ENCODE measurements at regions of chr6 and their contacts with region 1.

Region 1: DNA sequence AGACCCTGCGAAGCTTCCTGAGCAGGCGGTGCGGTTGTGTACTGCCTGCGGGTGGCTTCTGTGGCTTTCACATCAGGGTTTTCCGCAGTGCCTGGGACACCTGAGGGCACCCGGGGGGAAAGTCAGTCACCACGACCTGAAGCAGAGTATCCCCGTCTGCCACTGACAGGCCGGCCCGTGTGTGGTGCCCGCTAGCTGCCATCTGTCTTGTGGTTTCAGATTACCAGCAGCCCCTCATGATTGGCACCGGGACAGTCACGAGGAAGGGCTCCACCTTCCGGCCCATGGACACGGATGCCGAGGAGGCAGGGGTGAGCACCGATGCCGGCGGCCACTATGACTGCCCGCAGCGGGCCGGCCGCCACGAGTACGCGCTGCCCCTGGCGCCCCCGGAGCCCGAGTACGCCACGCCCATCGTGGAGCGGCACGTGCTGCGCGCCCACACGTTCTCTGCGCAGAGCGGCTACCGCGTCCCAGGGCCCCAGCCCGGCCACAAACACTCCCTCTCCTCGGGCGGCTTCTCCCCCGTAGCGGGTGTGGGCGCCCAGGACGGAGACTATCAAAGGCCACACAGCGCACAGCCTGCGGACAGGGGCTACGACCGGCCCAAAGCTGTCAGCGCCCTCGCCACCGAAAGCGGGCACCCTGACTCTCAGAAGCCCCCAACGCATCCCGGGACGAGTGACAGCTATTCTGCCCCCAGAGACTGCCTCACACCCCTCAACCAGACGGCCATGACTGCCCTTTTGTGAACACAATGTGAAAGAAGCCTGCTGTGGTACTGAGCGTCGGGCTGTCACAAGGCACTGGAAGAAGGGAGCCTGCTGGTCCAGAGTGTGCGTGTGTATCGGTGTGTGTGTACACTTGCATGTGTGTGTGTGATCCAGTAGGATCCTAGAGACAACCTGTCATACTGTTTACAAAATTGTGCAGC is 54.4 kb downstream of the GOPC start:
- DNase-seq: peak; percentile 56
- H3K4me3 Mint-ChIP-seq: peak overlapping the region; percentile 73
- H3K27ac Mint-ChIP-seq: peak overlapping the region; percentile 64
- H3K4me1 Mint-ChIP-seq: peaks cover 33% of the 10 kb centered on the region
- H3K27me3 Mint-ChIP-seq: peaks cover 5% of the 10 kb centered on the region

Region 2: DNA sequence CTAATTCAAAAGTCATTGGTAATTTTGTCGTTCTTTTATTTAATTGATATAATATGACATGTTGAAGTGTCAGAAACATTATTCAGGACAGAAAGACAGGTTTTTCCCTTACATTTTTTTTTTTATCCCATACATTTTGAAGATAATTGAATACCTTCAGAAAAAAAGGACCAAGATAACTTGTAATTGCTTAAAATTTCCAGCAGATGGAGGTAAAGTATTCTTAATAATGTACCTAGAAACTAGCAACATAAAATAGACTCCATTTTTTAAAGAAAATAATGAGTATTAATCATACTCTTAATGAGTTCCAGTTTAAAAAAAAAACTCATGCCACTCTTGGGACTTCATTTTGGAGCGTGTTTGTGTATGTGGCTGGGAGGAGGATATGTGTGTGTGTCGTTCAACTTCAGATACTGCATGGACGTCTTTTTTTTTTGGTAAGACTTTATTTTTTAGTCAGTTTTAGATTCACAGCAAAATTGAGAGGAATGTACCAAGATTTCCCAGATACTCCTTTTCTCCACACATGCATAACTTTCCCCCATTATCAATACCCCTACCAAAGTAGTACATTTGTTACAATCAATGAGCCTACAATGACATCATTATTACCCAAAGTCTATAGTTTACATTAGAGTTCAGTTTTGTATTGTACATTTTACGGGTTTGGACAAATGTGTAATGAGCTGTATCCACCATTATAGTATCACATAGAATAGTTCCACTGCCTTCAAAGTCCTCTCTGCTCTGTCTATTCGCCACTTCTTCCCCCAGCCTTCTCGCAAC is 201.6 kb before region 1 on chr6:
- CTCF ChIA-PET with region 1: no interaction called
- POLR2A ChIA-PET with region 1: no interaction called
- intact Hi-C with region 1: loop called (anchors 2 kb)
- DNase-seq: no peak
- H3K4me3 Mint-ChIP-seq: no peak overlapping the region
- H3K27ac Mint-ChIP-seq: no peak overlapping the region
- H3K4me1 Mint-ChIP-seq: no peaks in the 10 kb centered on the region
- H3K27me3 Mint-ChIP-seq: peaks cover 3% of the 10 kb centered on the region

Region 3: DNA sequence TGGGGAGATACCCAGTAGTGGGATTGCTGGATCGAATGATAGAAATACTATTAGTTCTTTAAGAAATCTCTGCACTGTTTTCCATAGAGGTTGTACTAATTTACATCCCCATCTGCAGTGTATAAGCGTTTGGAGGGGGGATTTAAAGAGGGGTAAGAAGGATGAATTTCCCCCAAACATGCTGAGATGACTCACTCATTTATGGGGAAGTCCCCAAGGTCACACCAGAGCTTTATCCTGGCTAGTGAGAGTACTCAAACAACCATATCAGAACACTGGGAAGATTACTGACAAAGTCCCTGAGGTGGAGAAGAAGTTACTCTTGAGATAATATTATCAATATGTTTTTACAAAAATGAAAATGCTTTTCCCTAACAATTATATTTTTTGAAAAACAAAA is 166.2 kb before region 1 on chr6:
- CTCF ChIA-PET with region 1: no interaction called
- POLR2A ChIA-PET with region 1: no interaction called
- intact Hi-C with region 1: no loop called
- DNase-seq: no peak
- H3K4me3 Mint-ChIP-seq: no peak overlapping the region
- H3K27ac Mint-ChIP-seq: no peak overlapping the region
- H3K4me1 Mint-ChIP-seq: no peaks in the 10 kb centered on the region
- H3K27me3 Mint-ChIP-seq: peaks cover 7% of the 10 kb centered on the region

Region 4: GRCh38 chr6:117463762-117464665 is 83.9 kb before region 1 on chr6:
- CTCF ChIA-PET with region 1: no interaction called
- POLR2A ChIA-PET with region 1: interaction called, 3 read pairs
- intact Hi-C with region 1: loop called (anchors 1 kb)
- DNase-seq: peak; percentile 33
- H3K4me3 Mint-ChIP-seq: peak overlapping the region; percentile 16
- H3K27ac Mint-ChIP-seq: peak overlapping the region; percentile 57
- H3K4me1 Mint-ChIP-seq: peaks cover 15% of the 10 kb centered on the region
- H3K27me3 Mint-ChIP-seq: peaks cover 13% of the 10 kb centered on the region

Region 5: GRCh38 chr6:117482240-117483003 is 65.5 kb before region 1 on chr6 and contains the start of gene DCBLD1:
- CTCF ChIA-PET with region 1: interaction called, 6 read pairs
- POLR2A ChIA-PET with region 1: interaction called, 17 read pairs
- intact Hi-C with region 1: loop called (anchors 1 kb)
- DNase-seq: peak; percentile 74
- H3K4me3 Mint-ChIP-seq: peak within 1 kb of the TSS; percentile 82
- H3K27ac Mint-ChIP-seq: no peak within 1 kb of the TSS
- H3K4me1 Mint-ChIP-seq: peaks cover 12% of the 10 kb centered on the region
- H3K27me3 Mint-ChIP-seq: peaks cover 23% of the 10 kb centered on the region
- total RNA-seq, gene DCBLD1: 4.4 to 4.5 TPM

Region 6: GRCh38 chr6:117568831-117569410 is 21.0 kb after region 1 on chr6:
- CTCF ChIA-PET with region 1: interaction called, 9 read pairs
- POLR2A ChIA-PET with region 1: interaction called, 13 read pairs
- intact Hi-C with region 1: loop called (anchors 1 kb)
- DNase-seq: no peak
- H3K4me3 Mint-ChIP-seq: no peak overlapping the region
- H3K27ac Mint-ChIP-seq: no peak overlapping the region
- H3K4me1 Mint-ChIP-seq: peaks cover 17% of the 10 kb centered on the region
- H3K27me3 Mint-ChIP-seq: no peaks in the 10 kb centered on the region

Region 7: GRCh38 chr6:117674991-117675657 is 127.2 kb after region 1 on chr6 and contains the start of gene NUS1:
- CTCF ChIA-PET with region 1: interaction called, 3 read pairs
- POLR2A ChIA-PET with region 1: no interaction called
- intact Hi-C with region 1: loop called (anchors 2 kb)
- DNase-seq: peak; percentile 99
- H3K4me3 Mint-ChIP-seq: peak within 1 kb of the TSS; percentile 95
- H3K27ac Mint-ChIP-seq: peak within 1 kb of the TSS; percentile 89
- H3K4me1 Mint-ChIP-seq: peaks cover 43% of the 10 kb centered on the region
- H3K27me3 Mint-ChIP-seq: no peaks in the 10 kb centered on the region
- total RNA-seq, gene NUS1: 33.6 to 33.9 TPM

Region 8: DNA sequence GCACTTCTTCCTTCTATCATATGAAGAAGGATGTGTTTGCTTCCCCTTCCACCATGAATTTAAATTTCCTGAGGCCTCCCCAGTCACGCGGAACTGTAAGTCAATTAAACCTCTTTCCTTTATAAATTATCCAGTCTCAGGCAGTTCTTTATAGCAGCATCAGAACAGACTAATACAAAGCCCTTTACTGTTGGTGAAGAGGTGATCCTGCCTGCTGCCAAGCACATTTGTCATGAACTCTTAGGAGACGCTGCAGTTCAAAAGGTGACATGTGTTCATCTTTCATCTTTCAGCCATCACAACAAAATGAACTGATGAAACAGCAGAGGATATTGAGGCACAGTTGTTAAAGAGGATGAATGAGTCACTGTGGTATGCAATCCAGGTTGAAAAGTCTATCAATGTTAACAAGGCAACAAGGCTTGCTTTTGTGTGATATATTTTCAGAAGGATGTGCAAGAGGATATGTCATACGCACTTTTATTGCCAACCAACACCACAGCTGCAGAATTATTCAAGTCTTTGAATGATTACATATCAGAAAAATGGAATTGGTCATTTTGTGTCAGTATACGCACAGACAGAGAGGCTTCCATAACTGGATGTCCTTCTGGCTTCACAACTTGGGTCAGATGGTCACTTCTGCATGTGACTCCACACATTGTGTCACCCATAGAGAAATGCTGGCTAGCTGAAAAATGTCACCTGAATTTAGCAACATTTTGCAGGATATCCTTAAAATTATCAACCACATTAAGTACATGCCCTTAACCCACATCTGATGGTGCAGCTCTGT is 947.7 kb after region 1 on chr6:
- CTCF ChIA-PET with region 1: no interaction called
- POLR2A ChIA-PET with region 1: no interaction called
- intact Hi-C with region 1: no loop called
- DNase-seq: no peak
- H3K4me3 Mint-ChIP-seq: no peak overlapping the region
- H3K27ac Mint-ChIP-seq: no peak overlapping the region
- H3K4me1 Mint-ChIP-seq: peaks cover 7% of the 10 kb centered on the region
- H3K27me3 Mint-ChIP-seq: no peaks in the 10 kb centered on the region

Measured in activated CD4-positive, alpha-beta memory T cell treated with anti-CD3 and anti-CD28 coated beads for 36 hours (primary cell).